ENCODE measurements at regions of chr14 and their contacts with region 1.

Region 1: DNA sequence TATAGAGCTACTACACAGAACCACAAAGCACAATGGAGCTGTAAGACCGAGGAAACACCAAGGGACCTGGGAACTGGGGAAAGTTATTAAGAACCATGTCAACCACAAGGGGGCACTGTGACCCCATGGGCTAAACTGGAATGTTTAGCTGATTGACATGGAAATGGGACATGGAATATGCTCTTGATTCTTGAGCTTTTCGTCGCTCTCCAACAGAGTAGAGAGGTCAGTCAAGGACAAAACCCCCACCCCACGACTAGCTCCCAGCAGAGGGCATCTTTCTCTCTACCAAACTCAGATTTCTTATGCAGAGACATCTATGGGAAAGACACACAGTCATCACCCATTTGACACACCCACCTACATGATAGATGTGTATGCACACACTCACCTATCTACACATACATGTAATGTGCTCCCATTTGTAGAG is 10.1 kb downstream of the NDRG2 start:
- DNase-seq: peak; percentile 82 to 85 (median 84)
- ATAC-seq: peak; percentile 58 to 85 (median 82)
- H3K4me3 ChIP-seq: no peak overlapping the region
- H3K27ac ChIP-seq: peak overlapping the region in 4 of 12 donors; percentile 9 to 28 (median 22)
- H3K4me1 ChIP-seq: peaks cover 0 to 27% (median 7%) of the 10 kb centered on the region in 12 donors
- H3K27me3 ChIP-seq: no peaks in the 10 kb centered on the region
- CTCF ChIP-seq: peak; percentile 86 to 99 (median 96)
- POLR2A ChIP-seq: no peak

Region 2: DNA sequence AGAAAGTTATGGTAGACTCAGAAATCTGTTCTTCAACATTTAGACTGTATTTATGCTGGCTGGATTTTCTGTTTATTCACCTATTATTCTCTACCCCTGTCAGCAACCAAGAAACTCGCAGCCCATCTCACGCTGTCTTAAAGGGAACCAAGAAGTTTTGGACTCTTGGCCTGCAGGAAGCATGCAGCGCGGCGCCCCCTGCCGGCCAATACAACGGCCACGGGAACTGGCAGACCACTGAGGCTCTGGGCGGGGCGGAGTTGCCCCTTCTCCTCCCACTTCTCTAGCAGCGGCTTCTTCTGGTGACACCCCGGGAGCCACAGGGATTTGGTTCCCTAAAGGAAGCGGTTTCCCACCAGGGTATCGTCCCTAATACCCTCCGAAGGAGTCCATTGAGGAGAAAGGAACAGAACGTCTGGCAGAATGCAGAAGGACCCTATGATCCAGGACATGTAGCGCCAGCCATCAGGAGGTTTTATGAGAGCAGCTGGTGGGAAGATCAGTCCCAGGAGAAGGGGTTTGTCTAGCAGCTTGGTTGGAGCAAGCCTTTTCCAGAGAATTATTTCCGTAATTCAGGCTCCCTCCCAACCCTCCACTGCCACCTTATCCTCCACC is 80.5 kb before region 1 on chr14:
- intact Hi-C with region 1: no loop called
- DNase-seq: peak in 4 of 5 donors; percentile 10 to 74 (median 32)
- ATAC-seq: no peak
- H3K4me3 ChIP-seq: no peak overlapping the region
- H3K27ac ChIP-seq: no peak overlapping the region
- H3K4me1 ChIP-seq: no peaks in the 10 kb centered on the region
- H3K27me3 ChIP-seq: peaks cover 0 to 12% (median 0%) of the 10 kb centered on the region in 9 donors
- CTCF ChIP-seq: peak in 11 of 12 donors; percentile 13 to 49 (median 41)
- POLR2A ChIP-seq: no peak

Region 3: GRCh38 chr14:21057803-21058675 is 43.3 kb after region 1 on chr14 and contains the start of gene RNASE8:
- intact Hi-C with region 1: loop called in 1 of 10 experiments (anchors 5 kb)
- DNase-seq: no peak
- ATAC-seq: peak in 2 of 4 donors; percentile 24 to 55
- H3K4me3 ChIP-seq: no peak within 1 kb of the TSS
- H3K27ac ChIP-seq: no peak within 1 kb of the TSS
- H3K4me1 ChIP-seq: peaks cover 0 to 5% (median 0%) of the 10 kb centered on the region in 12 donors
- H3K27me3 ChIP-seq: no peaks in the 10 kb centered on the region
- CTCF ChIP-seq: peak in 1 of 12 donors; percentile 5
- POLR2A ChIP-seq: no peak
- total RNA-seq, gene RNASE8: not detected

Measured in heart left ventricle (tissue), 16 donors.